Naive thymus-derived CD4-positive, alpha-beta T cell (primary cell): ENCODE measurements at regions of chr13 and their contacts with region 1.

Region 1: GRCh38 chr13:32443111-32443510 is 15.2 kb upstream of the N4BP2L1 start:
- DNase-seq: peak in 7 of 9 donors; percentile 12 to 59 (median 37)
- ATAC-seq: peak; percentile 79
- H3K4me3 ChIP-seq: no peak overlapping the region
- H3K4me3 Mint-ChIP-seq: no peak overlapping the region
- H3K27ac ChIP-seq: no peak overlapping the region
- H3K27ac Mint-ChIP-seq: peak overlapping the region in 3 of 9 donors; percentile 2 to 25 (median 6)
- H3K4me1 ChIP-seq: no peaks in the 10 kb centered on the region
- H3K4me1 Mint-ChIP-seq: peaks cover 0 to 10% (median 3%) of the 10 kb centered on the region in 7 donors
- H3K27me3 ChIP-seq: no peaks in the 10 kb centered on the region
- H3K27me3 Mint-ChIP-seq: no peaks in the 10 kb centered on the region

Region 2: DNA sequence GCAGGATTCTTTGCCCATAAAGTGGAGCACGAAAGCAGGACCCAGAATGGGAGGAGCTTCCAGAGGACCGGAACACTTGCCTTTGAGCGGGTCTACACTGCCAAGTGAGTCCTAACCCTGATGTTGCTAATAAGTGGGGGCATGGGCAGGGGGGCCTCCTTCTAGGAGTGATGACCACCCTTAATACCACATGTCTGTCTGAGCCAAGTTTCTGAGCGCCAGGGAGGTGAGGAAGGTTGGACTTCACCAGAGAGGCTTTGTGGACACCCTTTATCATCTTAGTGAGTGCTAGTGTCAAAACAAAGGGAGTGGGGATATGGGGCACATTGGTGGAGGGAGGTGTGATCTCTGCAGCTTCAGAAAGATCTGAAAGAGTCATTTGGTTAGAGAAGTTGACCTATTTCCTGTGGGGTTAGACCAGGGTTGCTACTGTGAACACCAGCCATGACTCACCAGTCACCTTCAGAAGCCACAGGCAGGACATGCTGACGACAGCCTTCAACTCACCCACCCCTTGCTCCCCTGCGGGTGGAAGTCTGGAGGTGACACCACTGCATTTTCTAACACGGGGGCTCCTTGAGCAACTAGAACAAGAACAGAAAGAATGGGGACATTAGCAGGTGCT is 1698.9 kb before region 1 on chr13:
- CTCF ChIA-PET with region 1: no interaction called
- POLR2A ChIA-PET with region 1: no interaction called
- intact Hi-C with region 1: no loop called
- DNase-seq: peak in 8 of 9 donors; percentile 33 to 78 (median 60)
- ATAC-seq: peak; percentile 89
- H3K4me3 ChIP-seq: peak overlapping the region; percentile 38
- H3K4me3 Mint-ChIP-seq: peak overlapping the region in 8 of 10 donors; percentile 4 to 76 (median 34)
- H3K27ac ChIP-seq: no peak overlapping the region
- H3K27ac Mint-ChIP-seq: peak overlapping the region; percentile 5 to 86 (median 38)
- H3K4me1 ChIP-seq: peaks cover 32 to 48% of the 10 kb centered on the region in 2 donors
- H3K4me1 Mint-ChIP-seq: peaks cover 47 to 59% (median 53%) of the 10 kb centered on the region in 7 donors
- H3K27me3 ChIP-seq: no peaks in the 10 kb centered on the region
- H3K27me3 Mint-ChIP-seq: no peaks in the 10 kb centered on the region

Region 3: DNA sequence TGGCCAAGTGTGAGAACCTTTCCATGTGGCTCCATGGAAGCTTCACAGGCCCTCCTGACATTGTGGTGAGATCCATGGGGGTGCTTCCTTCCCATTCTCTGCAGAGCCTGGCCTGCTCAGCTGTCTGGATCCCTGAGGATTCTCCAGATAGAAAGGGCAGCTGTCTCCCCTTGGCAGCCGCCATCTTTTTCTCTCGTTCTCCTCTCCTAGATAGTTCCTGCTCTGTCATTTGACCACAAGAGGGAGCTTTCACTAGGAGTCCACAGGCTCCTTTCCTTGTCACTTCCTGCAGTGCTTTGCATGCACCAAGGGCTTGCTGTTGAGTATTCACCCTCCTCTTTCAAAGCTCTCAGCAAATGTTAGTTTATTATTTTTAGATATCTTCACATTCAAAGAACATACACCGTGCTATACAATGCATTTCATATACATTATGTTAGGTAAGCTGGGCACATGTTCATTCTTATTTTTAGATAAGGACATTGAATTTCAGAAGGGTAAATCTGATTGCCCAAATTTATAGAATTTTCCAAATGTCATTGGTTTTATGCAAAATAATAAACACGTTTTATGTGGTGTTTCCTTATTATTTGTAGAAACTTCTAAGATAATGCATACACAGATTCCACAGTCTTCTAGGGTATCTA is 278.4 kb before region 1 on chr13:
- CTCF ChIA-PET with region 1: no interaction called
- POLR2A ChIA-PET with region 1: no interaction called
- intact Hi-C with region 1: loop called in 1 of 2 experiments (anchors 1 kb)
- DNase-seq: peak in 6 of 9 donors; percentile 3 to 47 (median 32)
- ATAC-seq: peak; percentile 63
- H3K4me3 ChIP-seq: no peak overlapping the region
- H3K4me3 Mint-ChIP-seq: no peak overlapping the region
- H3K27ac ChIP-seq: no peak overlapping the region
- H3K27ac Mint-ChIP-seq: peak overlapping the region in 2 of 9 donors; percentile 14 to 17
- H3K4me1 ChIP-seq: no peaks in the 10 kb centered on the region
- H3K4me1 Mint-ChIP-seq: peaks cover 0 to 2% (median 0%) of the 10 kb centered on the region in 7 donors
- H3K27me3 ChIP-seq: no peaks in the 10 kb centered on the region
- H3K27me3 Mint-ChIP-seq: no peaks in the 10 kb centered on the region

Region 4: DNA sequence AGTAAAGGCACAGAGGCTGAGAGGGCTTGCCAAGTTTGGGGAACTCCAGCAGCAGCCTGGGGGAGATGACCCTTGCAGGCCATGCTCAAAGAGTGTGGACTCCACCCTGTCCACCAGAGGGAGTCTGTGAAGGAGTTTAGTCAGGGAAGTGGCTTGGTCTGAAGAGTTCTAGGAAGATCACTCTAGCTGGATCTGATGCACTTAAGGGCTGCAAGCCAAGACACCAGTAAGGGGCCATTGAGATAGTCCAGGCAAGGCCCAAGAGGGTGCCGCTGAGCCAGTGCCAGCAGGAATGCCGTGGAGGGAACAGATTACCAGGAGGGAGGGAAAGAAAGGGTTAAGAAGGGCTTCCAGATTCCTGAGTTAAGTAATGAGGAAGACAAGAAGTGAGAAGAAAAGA is 196.6 kb before region 1 on chr13:
- CTCF ChIA-PET with region 1: no interaction called
- POLR2A ChIA-PET with region 1: no interaction called
- intact Hi-C with region 1: loop called in 1 of 2 experiments (anchors 1 kb)
- DNase-seq: peak in 2 of 9 donors; percentile 14 to 56
- ATAC-seq: peak; percentile 75
- H3K4me3 ChIP-seq: no peak overlapping the region
- H3K4me3 Mint-ChIP-seq: no peak overlapping the region
- H3K27ac ChIP-seq: no peak overlapping the region
- H3K27ac Mint-ChIP-seq: peak overlapping the region in 1 of 9 donors; percentile 62
- H3K4me1 ChIP-seq: no peaks in the 10 kb centered on the region
- H3K4me1 Mint-ChIP-seq: peaks cover 0 to 6% (median 0%) of the 10 kb centered on the region in 7 donors
- H3K27me3 ChIP-seq: no peaks in the 10 kb centered on the region
- H3K27me3 Mint-ChIP-seq: no peaks in the 10 kb centered on the region

Region 5: DNA sequence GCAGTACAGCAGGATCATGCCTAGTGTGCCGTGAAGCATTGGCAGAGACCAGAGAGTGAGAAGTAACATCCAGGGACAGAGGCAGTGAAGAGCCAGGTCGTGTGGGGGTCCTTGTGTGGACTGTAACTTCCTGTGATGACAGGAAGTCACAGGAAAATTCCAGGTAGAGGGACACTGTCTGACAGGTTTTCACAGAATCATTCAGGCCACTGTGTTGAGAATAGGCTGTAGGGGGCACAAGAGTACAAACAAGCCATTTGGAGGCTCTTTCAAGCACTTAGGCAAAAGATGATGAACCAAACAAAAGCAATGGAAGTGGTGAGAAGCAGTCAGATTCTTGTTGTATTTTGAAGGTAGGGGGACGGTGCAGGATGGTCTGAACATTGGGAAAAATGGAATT is 61.6 kb before region 1 on chr13:
- CTCF ChIA-PET with region 1: interaction called, 3 read pairs
- POLR2A ChIA-PET with region 1: no interaction called
- intact Hi-C with region 1: loop called (anchors 1 kb)
- DNase-seq: peak in 6 of 9 donors; percentile 5 to 41 (median 24)
- ATAC-seq: peak; percentile 73
- H3K4me3 ChIP-seq: no peak overlapping the region
- H3K4me3 Mint-ChIP-seq: no peak overlapping the region
- H3K27ac ChIP-seq: no peak overlapping the region
- H3K27ac Mint-ChIP-seq: no peak overlapping the region
- H3K4me1 ChIP-seq: no peaks in the 10 kb centered on the region
- H3K4me1 Mint-ChIP-seq: peaks cover 0 to under 1% (median 0%) of the 10 kb centered on the region in 7 donors
- H3K27me3 ChIP-seq: no peaks in the 10 kb centered on the region
- H3K27me3 Mint-ChIP-seq: no peaks in the 10 kb centered on the region

Region 6: GRCh38 chr13:32390048-32390447 is 53.1 kb before region 1 on chr13:
- CTCF ChIA-PET with region 1: interaction called, 3 read pairs
- POLR2A ChIA-PET with region 1: no interaction called
- intact Hi-C with region 1: loop called in 1 of 2 experiments (anchors 1 kb)
- DNase-seq: no peak
- ATAC-seq: peak; percentile 47
- H3K4me3 ChIP-seq: no peak overlapping the region
- H3K4me3 Mint-ChIP-seq: no peak overlapping the region
- H3K27ac ChIP-seq: no peak overlapping the region
- H3K27ac Mint-ChIP-seq: no peak overlapping the region
- H3K4me1 ChIP-seq: peaks cover 0 to 15% of the 10 kb centered on the region in 2 donors
- H3K4me1 Mint-ChIP-seq: peaks cover 4 to 9% (median 8%) of the 10 kb centered on the region in 7 donors
- H3K27me3 ChIP-seq: no peaks in the 10 kb centered on the region
- H3K27me3 Mint-ChIP-seq: no peaks in the 10 kb centered on the region

Region 7: DNA sequence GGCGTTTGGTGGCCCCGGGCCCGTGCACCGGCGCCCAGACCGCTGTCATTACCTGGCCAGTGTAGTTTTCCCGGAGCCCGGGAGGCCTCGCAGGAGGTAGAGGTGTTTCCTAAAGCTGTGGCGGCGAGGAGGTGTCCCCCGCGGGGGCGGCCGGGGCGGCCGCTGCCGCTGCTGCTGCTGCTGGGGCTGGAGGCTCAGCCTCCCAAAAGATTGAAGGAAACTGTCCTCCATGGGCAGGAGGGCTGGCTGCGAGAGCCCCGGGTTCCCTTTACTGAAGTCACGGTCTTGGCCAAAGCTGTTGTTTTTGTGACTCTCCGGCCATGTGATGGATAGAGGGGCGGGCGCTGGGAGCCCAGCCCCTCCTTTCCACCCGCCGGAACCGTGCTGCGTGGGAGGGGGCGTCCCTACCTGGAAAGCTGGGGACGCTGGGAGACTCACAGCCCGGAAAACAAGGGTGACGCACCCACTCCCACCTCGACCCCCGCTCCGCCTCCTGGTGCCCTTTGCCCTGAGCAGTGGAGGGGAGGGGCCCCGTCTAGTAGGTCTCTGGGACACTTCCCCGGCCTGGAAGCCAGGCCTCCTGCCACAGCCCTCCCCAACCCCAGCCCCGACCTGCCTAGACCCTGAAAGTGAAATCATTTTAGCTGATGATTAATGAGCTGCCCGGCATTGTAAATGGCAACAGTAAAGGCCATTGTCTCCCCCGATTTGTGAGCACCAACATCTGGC is 15.1 kb before region 1 on chr13 and contains the start of gene N4BP2L1:
- CTCF ChIA-PET with region 1: interaction called, 4 read pairs
- POLR2A ChIA-PET with region 1: interaction called, 5 read pairs
- intact Hi-C with region 1: loop called in 1 of 2 experiments (anchors 1 kb)
- DNase-seq: peak; percentile 60 to 91 (median 78)
- ATAC-seq: peak; percentile 81
- H3K4me3 ChIP-seq: peak within 1 kb of the TSS; percentile 64
- H3K4me3 Mint-ChIP-seq: peak within 1 kb of the TSS; percentile 90 to 100 (median 94)
- H3K27ac ChIP-seq: peak within 1 kb of the TSS; percentile 98
- H3K27ac Mint-ChIP-seq: peak within 1 kb of the TSS; percentile 95 to 99 (median 97)
- H3K4me1 ChIP-seq: peaks cover 19 to 20% of the 10 kb centered on the region in 2 donors
- H3K4me1 Mint-ChIP-seq: peaks cover 34 to 50% (median 48%) of the 10 kb centered on the region in 7 donors
- H3K27me3 ChIP-seq: no peaks in the 10 kb centered on the region
- H3K27me3 Mint-ChIP-seq: no peaks in the 10 kb centered on the region
- total RNA-seq, gene N4BP2L1: 30.4 to 58.0 (median 47.1) TPM